Stomach (tissue), 19 donors: ENCODE measurements at regions of chr10 and their contacts with region 1.

Region 1: GRCh38 chr10:48555310-48556042 is 49.4 kb downstream of the ARHGAP22 start:
- DNase-seq: no peak
- H3K4me3 ChIP-seq: no peak overlapping the region
- H3K27ac ChIP-seq: no peak overlapping the region
- H3K4me1 ChIP-seq: peaks cover 0 to 7% (median 5%) of the 10 kb centered on the region in 4 donors
- H3K27me3 ChIP-seq: no peaks in the 10 kb centered on the region
- CTCF ChIP-seq: no peak
- EP300 ChIP-seq: no peak
- POLR2A ChIP-seq: no peak

Region 2: GRCh38 chr10:48509974-48510692 is 45.3 kb before region 1 on chr10:
- intact Hi-C with region 1: no loop called
- DNase-seq: peak in 1 of 2 donors; percentile 25
- H3K4me3 ChIP-seq: no peak overlapping the region
- H3K27ac ChIP-seq: no peak overlapping the region
- H3K4me1 ChIP-seq: no peaks in the 10 kb centered on the region
- H3K27me3 ChIP-seq: no peaks in the 10 kb centered on the region
- CTCF ChIP-seq: no peak
- EP300 ChIP-seq: no peak
- POLR2A ChIP-seq: no peak

Region 3: GRCh38 chr10:48649349-48649944 is 94.0 kb after region 1 on chr10:
- intact Hi-C with region 1: loop called (anchors 2 kb)
- DNase-seq: no peak
- H3K4me3 ChIP-seq: no peak overlapping the region
- H3K27ac ChIP-seq: no peak overlapping the region
- H3K4me1 ChIP-seq: no peaks in the 10 kb centered on the region
- H3K27me3 ChIP-seq: peaks cover 0 to 3% (median 0%) of the 10 kb centered on the region in 3 donors
- CTCF ChIP-seq: no peak
- EP300 ChIP-seq: no peak
- POLR2A ChIP-seq: no peak